ENCODE measurements at regions of chr6 and their contacts with region 1.

Region 1: GRCh38 chr6:99425647-99426453 is 742 bp upstream of the PNISR start:
- DNase-seq: peak; percentile 79 to 85
- ATAC-seq: peak; percentile 82 to 90 (median 86)
- H3K4me3 ChIP-seq: peak overlapping the region; percentile 60 to 95 (median 78)
- H3K27ac ChIP-seq: peak overlapping the region; percentile 89 to 98 (median 96)
- H3K4me1 ChIP-seq: peaks cover 7 to 56% (median 54%) of the 10 kb centered on the region in 9 donors
- H3K27me3 ChIP-seq: no peaks in the 10 kb centered on the region
- CTCF ChIP-seq: peak in 7 of 9 donors; percentile 17 to 58 (median 47)

Region 2: DNA sequence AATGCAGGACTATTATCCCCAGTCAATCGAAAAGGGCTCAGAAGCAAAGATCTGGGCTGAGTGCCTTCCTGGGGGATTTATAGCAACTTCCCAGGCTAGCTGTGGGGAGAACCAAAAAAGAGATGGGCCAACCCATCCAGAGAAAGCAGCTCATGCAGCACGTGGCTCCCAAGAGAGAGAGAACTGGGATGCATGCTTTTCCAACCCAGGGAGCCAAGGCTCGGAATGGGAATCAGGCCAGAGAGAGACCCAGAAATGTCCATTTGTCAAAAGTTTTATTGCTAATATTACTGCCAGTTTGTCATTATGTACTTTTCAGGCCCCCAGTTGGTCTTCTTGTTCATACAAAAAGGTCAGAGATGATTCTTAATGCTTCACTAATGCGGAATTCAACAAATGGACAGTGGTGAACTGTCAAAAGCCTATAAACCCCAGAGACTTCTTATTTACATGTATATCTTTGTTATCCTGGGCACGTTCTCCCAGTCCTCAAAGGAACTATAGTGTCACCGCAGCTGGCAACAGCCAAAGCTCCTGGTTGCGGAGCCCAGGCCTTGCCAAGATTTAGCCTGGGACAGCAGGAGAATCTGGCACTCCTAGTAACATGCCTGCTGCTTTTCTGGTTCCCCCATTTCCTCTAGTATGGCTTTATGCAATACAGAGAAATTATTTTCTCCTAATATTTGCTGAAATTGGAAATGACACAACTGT is 730.6 kb before region 1 on chr6:
- intact Hi-C with region 1: no loop called
- DNase-seq: no peak
- ATAC-seq: no peak
- H3K4me3 ChIP-seq: no peak overlapping the region
- H3K27ac ChIP-seq: no peak overlapping the region
- H3K4me1 ChIP-seq: no peaks in the 10 kb centered on the region
- H3K27me3 ChIP-seq: no peaks in the 10 kb centered on the region
- CTCF ChIP-seq: no peak

Region 3: DNA sequence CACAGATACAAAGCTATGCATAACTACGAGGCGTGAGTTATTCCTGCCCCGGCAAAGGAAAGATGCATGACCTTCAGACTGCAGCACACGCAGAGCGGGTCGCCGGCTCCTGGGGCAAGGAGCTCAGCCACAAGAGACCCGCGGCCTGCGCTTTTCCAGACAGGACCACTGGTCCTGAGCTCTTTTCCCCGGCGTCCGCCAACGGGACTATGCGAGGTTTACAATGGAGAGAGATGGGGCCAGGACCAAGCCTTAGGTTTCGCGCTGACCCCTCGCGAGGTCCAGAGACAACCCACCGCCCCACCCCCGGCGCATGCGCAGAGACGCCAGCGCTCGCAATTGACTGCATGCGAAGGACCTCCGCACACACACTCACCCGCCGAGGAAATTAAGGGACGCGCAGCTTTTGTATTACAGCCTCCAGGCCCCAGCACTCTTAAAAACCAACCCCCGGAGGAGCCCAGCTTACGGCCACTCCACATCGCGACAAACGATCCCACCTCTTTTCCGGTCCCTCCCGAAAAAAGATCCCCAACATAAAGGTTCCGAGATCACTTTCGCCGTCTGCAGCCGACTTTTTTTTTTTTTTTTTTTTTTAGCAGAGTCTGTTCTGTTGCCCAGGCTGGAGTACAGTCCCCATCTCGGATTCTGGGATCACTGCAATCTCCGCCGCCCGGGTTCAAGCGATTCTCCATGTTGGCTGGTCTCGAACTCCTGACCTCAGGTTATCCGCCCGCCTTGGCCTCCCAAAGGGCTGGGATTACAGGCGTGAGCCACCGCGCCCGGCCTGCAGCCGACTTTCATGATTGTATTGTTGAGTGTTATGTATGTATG is 31.9 kb before region 1 on chr6 and contains the start of gene COQ3:
- intact Hi-C with region 1: loop called in 1 of 10 experiments (anchors 5 kb)
- DNase-seq: peak; percentile 72 to 79
- ATAC-seq: peak; percentile 85 to 94 (median 93)
- H3K4me3 ChIP-seq: peak within 1 kb of the TSS; percentile 66 to 91 (median 77)
- H3K27ac ChIP-seq: peak within 1 kb of the TSS; percentile 44 to 91 (median 86)
- H3K4me1 ChIP-seq: peaks cover 0 to 16% (median 6%) of the 10 kb centered on the region in 9 donors
- H3K27me3 ChIP-seq: no peaks in the 10 kb centered on the region
- CTCF ChIP-seq: no peak
- total RNA-seq, gene COQ3: 22.4 to 41.5 (median 33.4) TPM

Region 4: DNA sequence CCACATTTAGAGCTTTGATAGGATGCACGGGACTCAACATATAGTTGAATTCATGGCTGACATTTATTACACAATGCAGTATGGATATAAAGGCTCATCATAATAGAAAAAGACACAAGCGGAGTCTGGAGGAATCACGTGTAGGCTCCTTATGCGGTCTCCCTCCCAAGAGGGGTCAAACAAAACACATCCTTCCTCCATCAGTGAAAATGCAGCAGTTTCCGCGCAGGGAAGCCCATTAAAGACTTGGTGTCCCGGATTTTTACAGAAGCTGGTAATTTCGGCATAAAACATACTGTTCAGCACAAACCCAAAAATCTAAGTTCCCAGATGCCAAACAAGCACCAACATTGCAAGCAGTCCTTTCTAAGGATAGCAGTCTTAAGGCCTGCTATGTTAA is 88.2 kb after region 1 on chr6:
- intact Hi-C with region 1: loop called in 6 of 10 experiments (anchors 5 to 10 kb)
- DNase-seq: no peak
- ATAC-seq: no peak
- H3K4me3 ChIP-seq: peak overlapping the region in 8 of 10 donors; percentile 65 to 96 (median 88)
- H3K27ac ChIP-seq: peak overlapping the region in 2 of 10 donors; percentile 89 to 96
- H3K4me1 ChIP-seq: peaks cover 0 to 24% (median 15%) of the 10 kb centered on the region in 9 donors
- H3K27me3 ChIP-seq: no peaks in the 10 kb centered on the region
- CTCF ChIP-seq: no peak

Region 5: GRCh38 chr6:99520855-99521632 is 95.2 kb after region 1 on chr6:
- intact Hi-C with region 1: loop called in 5 of 10 experiments (anchors 5 to 10 kb)
- DNase-seq: peak; percentile 82 to 84
- ATAC-seq: peak; percentile 96 to 99 (median 98)
- H3K4me3 ChIP-seq: peak overlapping the region; percentile 60 to 96 (median 74)
- H3K27ac ChIP-seq: peak overlapping the region; percentile 55 to 94 (median 89)
- H3K4me1 ChIP-seq: peaks cover 0 to 18% (median 8%) of the 10 kb centered on the region in 9 donors
- H3K27me3 ChIP-seq: no peaks in the 10 kb centered on the region
- CTCF ChIP-seq: peak; percentile 72 to 93 (median 87)

Region 6: DNA sequence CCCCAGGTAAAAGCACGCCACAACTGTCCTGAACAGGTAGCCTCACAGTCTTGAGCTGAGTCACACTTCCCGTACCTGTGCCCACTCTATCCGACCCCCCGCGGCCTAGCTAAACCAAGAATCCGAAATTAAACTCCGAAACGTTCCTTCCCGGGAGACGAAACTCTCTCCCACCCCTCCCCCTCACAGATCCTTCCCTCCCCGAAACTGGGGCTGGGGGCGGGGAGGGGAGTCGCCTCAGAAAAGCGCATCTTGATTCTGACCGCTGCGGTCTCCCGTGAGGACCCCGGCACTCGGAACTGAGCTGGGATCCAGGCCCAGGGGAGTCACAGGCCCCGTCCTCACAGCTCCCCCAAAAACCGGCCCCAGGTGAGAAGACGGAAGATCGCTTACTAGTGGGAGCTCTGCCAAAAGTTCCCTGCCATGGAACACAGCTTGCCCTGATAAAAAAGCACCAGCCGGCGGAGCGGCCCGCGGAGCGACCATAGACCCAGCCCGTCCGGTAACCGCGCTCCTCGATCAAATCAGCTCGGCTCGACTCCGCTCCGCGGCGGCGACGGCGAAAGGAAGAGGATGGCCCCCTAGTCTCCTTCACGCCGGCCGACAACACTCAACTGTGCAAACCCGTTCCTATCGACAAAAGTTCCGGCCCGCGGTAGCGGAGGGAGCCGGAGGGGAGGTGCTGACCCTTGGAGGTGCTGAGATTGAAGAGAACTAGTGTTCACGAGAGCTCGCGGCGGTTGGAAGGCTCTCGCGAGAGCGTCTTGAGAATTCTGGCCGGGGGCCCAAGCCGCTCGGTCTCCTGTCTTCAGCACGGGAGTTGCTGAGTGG is 142.5 kb after region 1 on chr6 and contains the start of gene CCNC:
- intact Hi-C with region 1: loop called in 1 of 10 experiments (anchors 10 kb)
- DNase-seq: peak; percentile 93
- ATAC-seq: peak; percentile 99 to 100 (median 99)
- H3K4me3 ChIP-seq: peak within 1 kb of the TSS; percentile 76 to 98 (median 94)
- H3K27ac ChIP-seq: peak within 1 kb of the TSS; percentile 26 to 89 (median 84)
- H3K4me1 ChIP-seq: peaks cover 4 to 33% (median 26%) of the 10 kb centered on the region in 9 donors
- H3K27me3 ChIP-seq: no peaks in the 10 kb centered on the region
- CTCF ChIP-seq: no peak
- total RNA-seq, gene CCNC: 14.2 to 24.1 (median 18.6) TPM

Measured in heart right ventricle (tissue), 16 donors.